Left cardiac atrium (tissue), 4 donors: ENCODE measurements at regions of chr22 and their contacts with region 1.

Region 1: GRCh38 chr22:22687638-22688500 is 43.5 kb downstream of the GGTLC2 start:
- DNase-seq: no peak
- ATAC-seq: peak; percentile 68 to 78

Region 2: DNA sequence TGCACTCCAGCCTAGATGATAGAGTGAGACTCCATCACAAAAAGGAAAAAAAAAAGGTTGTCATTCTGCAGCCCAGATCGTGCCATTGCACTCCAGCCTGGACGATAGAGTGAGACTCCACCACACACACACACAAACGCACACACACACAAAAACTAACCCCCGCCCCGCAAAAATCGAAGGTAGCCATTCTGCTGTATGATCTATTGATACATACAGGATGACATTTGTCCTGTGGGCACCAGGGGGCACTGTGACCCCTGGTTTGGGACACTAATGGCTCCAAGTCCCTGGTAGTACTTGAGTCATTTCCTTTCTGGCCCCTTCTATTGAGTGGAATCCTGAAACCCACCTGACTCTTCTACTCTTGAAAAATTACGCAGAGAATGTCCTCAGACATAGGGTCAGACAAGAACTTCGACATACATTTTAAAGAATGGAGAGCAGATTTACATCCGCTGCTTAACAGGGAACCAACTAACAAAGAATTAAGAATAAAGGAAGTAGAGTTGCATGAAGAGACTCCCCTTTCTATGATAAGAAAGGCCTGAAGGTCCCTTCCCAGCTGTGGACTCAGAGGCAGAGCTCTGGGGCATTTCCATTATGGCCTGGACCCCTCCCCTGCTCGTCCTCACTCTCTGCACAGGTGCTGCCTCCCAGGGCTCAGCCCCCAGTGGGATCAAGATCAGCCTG is 93.8 kb before region 1 on chr22:
- intact Hi-C with region 1: loop called in 1 of 2 experiments (anchors 10 kb)
- DNase-seq: peak; percentile 42
- ATAC-seq: peak in 1 of 2 donors; percentile 32

Region 3: DNA sequence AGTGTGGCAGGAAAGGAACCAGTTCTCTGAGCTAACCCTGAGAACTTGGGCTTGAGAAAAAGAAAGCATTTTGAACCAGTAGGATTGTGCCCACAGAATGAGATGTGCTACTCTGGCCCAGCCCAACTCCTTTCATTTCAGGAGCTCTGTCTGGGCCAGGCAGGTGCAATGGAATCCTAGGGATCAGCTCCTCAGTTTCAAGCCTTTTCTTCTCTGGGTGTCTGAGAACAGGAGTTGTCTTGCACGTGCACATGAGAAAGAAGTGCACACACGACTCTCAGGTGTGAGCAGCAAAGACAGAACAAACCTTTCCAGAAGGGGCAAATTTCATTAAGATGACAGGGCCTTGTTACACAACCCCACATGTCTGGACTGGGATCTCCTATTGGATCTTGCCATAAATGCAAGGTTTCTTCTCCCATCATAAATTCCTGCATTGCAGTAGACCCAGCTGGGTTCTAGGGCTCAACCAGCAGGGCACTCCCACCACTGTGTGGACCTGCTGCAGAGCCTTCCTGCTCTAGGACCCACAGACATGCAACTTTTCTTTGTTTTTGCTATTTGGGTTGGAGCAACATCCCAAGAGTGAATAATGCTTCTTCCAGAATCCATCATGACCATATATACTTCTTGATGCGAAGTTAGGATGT is 68.0 kb before region 1 on chr22:
- intact Hi-C with region 1: no loop called
- DNase-seq: no peak
- ATAC-seq: no peak

Region 4: DNA sequence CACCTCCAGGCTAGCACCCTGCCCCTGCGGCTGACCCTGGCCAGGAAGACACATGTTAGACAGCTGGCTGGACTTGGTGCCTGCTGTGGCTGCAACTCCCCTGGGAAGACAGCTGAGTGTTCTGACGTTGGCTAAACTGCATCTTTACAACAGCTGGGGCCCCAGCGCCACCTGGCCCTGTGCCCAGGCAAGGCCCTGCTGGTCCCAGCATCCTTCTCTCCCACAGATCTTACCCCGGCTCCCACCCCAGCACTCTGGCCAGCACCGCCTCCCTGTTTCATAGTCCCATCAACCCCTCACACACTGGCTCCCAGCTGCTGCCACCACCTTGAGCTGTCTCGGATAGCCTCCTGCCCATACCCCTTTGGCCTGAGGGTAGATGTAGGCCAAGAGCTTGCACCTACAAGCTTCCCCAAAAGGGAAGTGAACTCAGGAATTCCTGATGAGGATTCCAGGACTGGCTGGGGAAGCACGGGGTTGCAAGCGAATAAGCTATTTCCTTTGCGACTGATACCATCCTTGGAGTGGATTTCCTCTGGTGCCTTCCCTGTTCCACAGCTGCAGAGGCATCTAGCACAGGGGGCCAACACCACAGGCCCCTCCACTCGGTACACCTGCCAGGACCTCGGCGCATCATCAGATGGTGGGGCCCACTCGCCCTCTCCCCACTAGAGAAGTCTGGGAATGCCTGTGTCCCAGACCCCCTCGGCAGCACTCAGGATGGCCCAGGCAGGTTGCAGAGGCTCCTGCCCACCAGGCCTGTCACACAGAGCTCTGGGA is 425.4 kb after region 1 on chr22:
- intact Hi-C with region 1: no loop called
- DNase-seq: peak; percentile 36
- ATAC-seq: peak in 1 of 2 donors; percentile 70